Activated CD8-positive, alpha-beta memory T cell treated with anti-CD3 and anti-CD28 coated beads, Interleukin-2, amount 10 ng/mL, durations not matched to agents 7 days and 5 days (primary cell): ENCODE measurements at regions of chr6 and their contacts with region 1.

Region 1: DNA sequence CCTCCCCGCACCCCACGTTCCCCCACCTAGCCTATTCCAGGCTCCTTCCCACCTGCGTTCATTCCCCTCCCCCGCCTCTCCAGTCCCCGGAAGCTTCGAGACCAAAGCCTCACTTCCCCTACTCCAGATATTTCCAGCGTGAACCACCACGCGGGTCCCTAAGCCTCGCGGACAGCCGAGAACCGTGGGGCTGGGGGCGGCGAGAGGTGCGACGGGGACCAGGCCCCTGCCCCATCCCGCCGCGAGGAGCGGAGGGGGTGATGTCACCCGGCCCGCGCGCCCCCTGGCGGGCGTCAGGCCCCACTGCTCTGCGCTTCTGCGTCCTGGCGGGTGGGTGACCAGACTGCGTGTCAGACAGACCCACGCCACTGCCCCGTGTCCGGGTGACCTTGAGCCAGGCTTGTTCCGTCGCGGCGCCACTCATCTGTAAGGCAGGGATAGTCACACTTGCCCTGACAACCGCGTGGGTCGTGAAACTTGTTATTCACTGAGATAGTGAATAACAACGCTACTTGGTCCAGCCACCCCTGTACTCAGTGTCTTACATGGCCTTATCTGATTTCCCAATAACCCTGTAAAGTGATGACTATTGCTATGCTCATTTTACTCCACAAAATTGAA is 9.0 kb upstream of the HSP90AB1 start:
- DNase-seq: peak; percentile 85
- ATAC-seq: peak; percentile 94
- H3K4me3 Mint-ChIP-seq: peak overlapping the region; percentile 84
- H3K27ac Mint-ChIP-seq: peak overlapping the region; percentile 96
- H3K4me1 Mint-ChIP-seq: peaks cover 26% of the 10 kb centered on the region
- H3K27me3 Mint-ChIP-seq: no peaks in the 10 kb centered on the region

Region 2: DNA sequence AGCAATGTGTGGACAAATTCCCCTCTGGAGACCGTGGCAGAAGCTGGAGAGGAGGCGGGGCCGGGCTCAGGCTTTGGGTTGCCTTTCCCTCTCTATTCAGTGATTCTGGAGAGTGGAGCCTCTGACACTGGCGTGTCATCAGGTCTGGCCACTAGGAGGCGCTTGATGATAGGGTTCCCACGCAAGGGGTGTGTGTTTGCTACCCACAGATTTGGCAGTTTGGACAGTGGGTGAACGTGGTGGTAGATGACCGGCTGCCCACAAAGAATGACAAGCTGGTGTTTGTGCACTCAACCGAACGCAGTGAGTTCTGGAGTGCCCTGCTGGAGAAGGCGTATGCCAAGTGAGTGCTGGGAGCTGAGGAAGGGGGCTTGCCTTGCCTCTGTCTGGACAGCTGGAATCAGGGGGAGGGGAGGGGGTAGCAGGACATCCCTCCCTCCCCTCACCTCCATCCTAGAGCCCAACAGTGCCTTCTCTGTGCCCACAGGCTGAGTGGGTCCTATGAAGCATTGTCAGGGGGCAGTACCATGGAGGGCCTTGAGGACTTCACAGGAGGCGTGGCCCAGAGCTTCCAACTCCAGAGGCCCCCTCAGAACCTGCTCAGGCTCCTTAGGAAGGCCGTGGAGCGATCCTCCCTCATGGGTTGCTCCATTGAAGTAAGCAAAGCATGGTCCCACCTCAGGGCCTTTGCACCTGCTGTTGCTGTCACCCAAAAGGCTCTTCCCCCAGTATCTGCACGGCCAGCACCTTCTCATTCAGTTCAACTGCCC is 65.0 kb before region 1 on chr6:
- CTCF ChIA-PET with region 1: interaction called, 41 read pairs
- DNase-seq: peak; percentile 87
- ATAC-seq: peak; percentile 90
- H3K4me3 Mint-ChIP-seq: no peak overlapping the region
- H3K27ac Mint-ChIP-seq: no peak overlapping the region
- H3K4me1 Mint-ChIP-seq: peaks cover 24% of the 10 kb centered on the region
- H3K27me3 Mint-ChIP-seq: peaks cover 24% of the 10 kb centered on the region

Region 3: DNA sequence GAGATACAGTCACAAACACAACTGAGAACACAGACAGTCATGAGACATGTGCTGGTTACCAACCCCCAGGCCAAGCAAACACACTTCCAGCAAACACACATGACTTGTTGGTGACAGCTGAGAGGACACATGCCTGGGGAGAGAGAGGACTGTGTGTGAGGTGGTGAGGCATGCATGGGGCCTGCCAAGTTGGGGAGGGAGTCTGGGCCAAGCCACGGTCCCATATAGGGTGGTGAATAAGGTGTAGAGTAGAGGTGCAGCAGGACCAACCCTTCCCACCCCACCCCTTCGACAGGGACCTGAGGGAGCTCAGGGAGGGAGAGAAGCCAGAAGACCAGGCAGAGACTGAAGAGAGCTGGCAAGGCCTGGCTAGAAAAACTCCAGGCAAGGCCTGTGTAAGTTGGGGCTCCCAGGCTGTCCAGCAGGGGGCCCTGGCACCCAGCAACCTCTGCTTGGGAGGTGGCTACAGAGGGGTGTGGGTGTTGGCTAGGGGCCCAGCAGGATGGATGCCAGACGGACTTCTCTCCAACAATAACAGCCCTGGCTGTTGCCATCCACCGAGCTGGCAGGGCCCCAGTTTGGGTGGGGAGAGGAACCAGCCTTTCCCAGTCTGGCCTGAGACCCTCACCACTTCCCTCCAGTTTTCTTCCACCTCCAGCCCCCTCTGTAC is 16.5 kb before region 1 on chr6:
- CTCF ChIA-PET with region 1: interaction called, 88 read pairs
- DNase-seq: peak; percentile 85
- ATAC-seq: peak; percentile 64
- H3K4me3 Mint-ChIP-seq: no peak overlapping the region
- H3K27ac Mint-ChIP-seq: peak overlapping the region; percentile 3
- H3K4me1 Mint-ChIP-seq: peaks cover 37% of the 10 kb centered on the region
- H3K27me3 Mint-ChIP-seq: peaks cover 11% of the 10 kb centered on the region

Region 4: GRCh38 chr6:44227147-44227793 is 10.7 kb before region 1 on chr6:
- CTCF ChIA-PET with region 1: interaction called, 88 read pairs
- DNase-seq: no peak
- ATAC-seq: no peak
- H3K4me3 Mint-ChIP-seq: no peak overlapping the region
- H3K27ac Mint-ChIP-seq: no peak overlapping the region
- H3K4me1 Mint-ChIP-seq: peaks cover 24% of the 10 kb centered on the region
- H3K27me3 Mint-ChIP-seq: no peaks in the 10 kb centered on the region

Region 5: DNA sequence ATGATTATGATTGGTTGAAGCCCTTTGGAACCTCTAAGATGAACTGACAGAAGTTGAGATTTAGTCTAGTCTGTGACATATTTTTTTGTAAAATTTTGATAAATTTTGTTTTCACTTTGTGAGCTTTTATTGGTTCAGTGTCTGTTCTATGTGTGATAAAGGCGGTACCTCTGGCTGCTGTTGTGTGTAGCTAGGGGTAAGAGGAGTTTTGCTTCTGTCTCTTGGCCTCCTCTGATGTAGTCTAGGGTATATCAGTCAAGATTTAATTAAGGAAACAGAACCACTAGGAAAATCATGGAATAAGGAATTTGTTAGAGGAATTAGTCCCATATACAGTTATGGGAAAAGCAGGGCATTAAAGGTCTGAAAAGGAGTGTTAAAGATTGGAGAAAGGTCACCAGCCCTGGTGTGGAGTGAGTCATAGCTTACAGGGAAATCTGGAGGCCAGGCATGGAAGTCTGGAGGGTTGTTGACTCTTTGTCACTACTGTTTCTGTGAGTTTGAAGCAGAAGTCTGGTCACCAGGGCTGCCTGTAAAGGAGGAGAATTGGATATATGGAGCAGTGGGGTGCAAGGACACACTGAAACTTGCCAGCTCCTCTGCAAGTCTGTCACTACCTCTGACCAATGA is 178.1 kb after region 1 on chr6:
- CTCF ChIA-PET with region 1: no interaction called
- DNase-seq: no peak
- ATAC-seq: no peak
- H3K4me3 Mint-ChIP-seq: no peak overlapping the region
- H3K27ac Mint-ChIP-seq: no peak overlapping the region
- H3K4me1 Mint-ChIP-seq: peaks cover 12% of the 10 kb centered on the region
- H3K27me3 Mint-ChIP-seq: no peaks in the 10 kb centered on the region